ENCODE measurements at regions of chr11 and their contacts with region 1.

Region 1: DNA sequence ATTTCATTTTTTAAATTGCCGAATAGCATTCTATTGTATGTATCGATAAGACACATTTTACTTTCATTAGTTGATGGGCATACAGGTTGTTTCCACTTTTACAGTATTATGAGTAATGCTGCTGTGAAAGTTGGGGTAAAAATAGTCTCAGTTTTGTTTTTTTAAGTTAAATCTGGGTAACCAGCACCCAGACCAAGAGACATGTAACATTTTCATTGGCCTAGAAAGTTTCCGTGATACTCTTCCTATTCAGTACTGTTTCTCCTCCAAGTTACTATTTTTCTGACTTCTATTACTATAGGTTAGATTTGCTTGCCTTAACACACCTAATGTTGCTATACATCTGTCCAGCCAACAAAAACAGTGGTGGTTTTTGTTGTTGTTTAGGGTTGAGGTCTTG is 12.3 kb downstream of the IPO7 start:
- DNase-seq: no peak
- H3K4me3 ChIP-seq: no peak overlapping the region
- H3K27ac ChIP-seq: no peak overlapping the region
- H3K27me3 ChIP-seq: no peaks in the 10 kb centered on the region
- CTCF ChIP-seq: no peak

Region 2: DNA sequence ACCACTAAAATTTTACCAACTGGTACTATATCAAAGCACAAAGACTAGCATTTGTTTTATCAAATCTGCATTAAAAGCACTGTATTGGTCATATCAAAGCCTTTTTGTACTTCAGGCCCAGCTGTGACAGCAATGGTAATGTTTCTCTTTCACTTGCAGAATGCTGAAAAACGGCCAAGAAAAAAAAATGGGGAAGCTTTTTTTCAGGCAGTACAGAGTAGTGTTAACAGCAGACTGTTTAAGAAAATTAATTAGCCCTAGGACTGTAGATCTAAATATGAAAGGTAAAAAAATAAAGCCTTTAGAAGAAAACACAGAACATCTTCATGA is 164.9 kb before region 1 on chr11:
- in situ Hi-C with region 1: no loop called
- DNase-seq: peak; percentile 36
- H3K4me3 ChIP-seq: no peak overlapping the region
- H3K27ac ChIP-seq: no peak overlapping the region
- H3K27me3 ChIP-seq: no peaks in the 10 kb centered on the region
- CTCF ChIP-seq: no peak

Region 3: DNA sequence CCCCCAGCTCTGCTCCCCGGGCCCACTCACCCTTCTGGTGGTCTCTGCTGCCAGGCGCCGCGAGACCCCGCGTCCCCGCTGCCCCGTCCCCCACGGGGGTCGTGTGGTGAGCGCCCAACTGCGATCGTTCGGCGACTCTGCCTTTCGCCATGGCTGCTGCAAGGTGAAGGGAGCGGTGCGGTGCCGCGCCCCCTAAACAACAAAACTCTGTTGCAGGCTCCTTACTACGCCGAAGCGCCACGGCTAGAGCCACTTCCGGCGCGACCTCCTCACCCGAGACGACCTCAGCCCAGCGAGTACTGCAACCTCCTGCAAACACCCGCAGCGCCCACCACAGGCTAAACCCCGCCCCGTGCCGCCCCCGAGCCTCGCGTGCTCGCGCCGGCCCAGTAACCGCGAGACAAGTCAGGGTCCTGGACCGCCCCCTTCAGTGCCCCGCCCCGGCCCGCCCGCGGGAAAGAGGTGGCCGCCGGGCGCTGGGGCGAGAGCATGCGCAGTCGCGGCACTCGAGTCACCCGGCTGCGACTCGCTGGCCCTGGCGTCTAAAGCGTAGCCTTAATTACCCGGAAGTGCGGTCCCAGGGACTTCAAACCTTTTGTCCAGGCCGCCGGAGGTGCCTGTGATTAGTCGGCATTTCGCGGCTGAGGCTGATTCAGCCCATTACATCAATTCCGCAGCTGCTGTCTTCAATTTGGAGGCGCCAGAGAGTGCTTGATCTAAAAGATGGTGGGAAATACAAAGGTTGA is 82.3 kb before region 1 on chr11 and contains the start of gene TMEM41B:
- in situ Hi-C with region 1: loop called (anchors 25 kb)
- DNase-seq: peak; percentile 97
- H3K4me3 ChIP-seq: peak within 1 kb of the TSS; percentile 98
- H3K27ac ChIP-seq: peak within 1 kb of the TSS; percentile 83
- H3K27me3 ChIP-seq: no peaks in the 10 kb centered on the region
- CTCF ChIP-seq: peak; percentile 8

Region 4: GRCh38 chr11:9626496-9627394 is 230.0 kb after region 1 on chr11:
- in situ Hi-C with region 1: no loop called
- DNase-seq: no peak
- H3K4me3 ChIP-seq: no peak overlapping the region
- H3K27ac ChIP-seq: no peak overlapping the region
- H3K27me3 ChIP-seq: no peaks in the 10 kb centered on the region
- CTCF ChIP-seq: no peak

Measured in brain microvascular endothelial cell (primary cell).